ENCODE measurements at regions of chr16 and their contacts with region 1.

Region 1: GRCh38 chr16:79601931-79602627 is 1.5 kb upstream of the MAF start:
- DNase-seq: peak; percentile 92
- H3K4me3 Mint-ChIP-seq: peak overlapping the region; percentile 96
- H3K27ac Mint-ChIP-seq: peak overlapping the region; percentile 98
- H3K4me1 Mint-ChIP-seq: peaks cover 38% of the 10 kb centered on the region
- H3K27me3 Mint-ChIP-seq: peaks cover 3% of the 10 kb centered on the region

Region 2: DNA sequence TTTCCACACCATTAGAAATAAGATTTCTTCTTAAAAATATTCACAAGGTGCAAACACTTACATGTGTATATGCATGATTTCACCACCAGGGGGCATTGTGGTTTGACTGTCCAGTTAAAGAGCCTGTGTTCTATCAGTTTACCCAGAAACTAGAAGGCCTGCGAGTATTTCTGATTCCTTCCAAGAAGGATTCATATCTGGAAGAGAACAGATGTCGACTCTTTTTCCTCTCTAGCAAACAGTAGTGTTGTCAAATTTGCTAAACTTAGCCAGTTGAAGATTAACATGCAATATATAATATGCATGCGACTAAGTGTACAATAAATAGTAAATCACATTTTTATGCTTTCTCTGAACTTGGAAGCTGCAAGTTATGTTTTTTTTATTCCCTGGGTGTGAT is 1098.5 kb before region 1 on chr16:
- CTCF ChIA-PET with region 1: no interaction called
- POLR2A ChIA-PET with region 1: no interaction called
- intact Hi-C with region 1: loop called (anchors 10 kb)
- DNase-seq: peak; percentile 52
- H3K4me3 Mint-ChIP-seq: no peak overlapping the region
- H3K27ac Mint-ChIP-seq: no peak overlapping the region
- H3K4me1 Mint-ChIP-seq: no peaks in the 10 kb centered on the region
- H3K27me3 Mint-ChIP-seq: no peaks in the 10 kb centered on the region

Region 3: GRCh38 chr16:78900044-78900811 is 701.9 kb before region 1 on chr16:
- CTCF ChIA-PET with region 1: interaction called, 3 read pairs
- POLR2A ChIA-PET with region 1: interaction called, 14 read pairs
- intact Hi-C with region 1: loop called (anchors 1 kb)
- DNase-seq: no peak
- H3K4me3 Mint-ChIP-seq: peak overlapping the region; percentile 20
- H3K27ac Mint-ChIP-seq: peak overlapping the region; percentile 96
- H3K4me1 Mint-ChIP-seq: peaks cover 76% of the 10 kb centered on the region
- H3K27me3 Mint-ChIP-seq: no peaks in the 10 kb centered on the region

Region 4: DNA sequence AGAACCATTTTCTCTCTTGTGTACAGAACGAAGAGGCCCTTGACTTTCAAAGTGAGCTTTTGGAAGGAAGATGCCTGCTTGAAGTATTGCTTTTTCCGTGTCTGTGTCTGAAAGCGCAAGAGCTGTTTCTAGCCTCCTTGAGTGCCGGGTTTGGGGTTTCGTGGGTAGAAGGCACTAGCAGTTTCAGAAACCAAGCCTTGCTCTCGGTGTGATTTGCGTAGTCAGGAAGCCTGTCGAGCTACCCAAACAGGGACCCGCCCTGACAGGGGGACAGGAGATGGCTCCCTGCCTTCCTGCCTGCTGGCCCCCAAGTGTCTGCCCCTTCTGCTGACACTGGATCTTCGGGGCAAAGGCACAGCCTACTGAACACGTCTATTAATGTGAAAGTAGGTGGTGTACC is 323.6 kb before region 1 on chr16:
- CTCF ChIA-PET with region 1: interaction called, 9 read pairs
- POLR2A ChIA-PET with region 1: interaction called, 18 read pairs
- intact Hi-C with region 1: loop called (anchors 2 kb)
- DNase-seq: peak; percentile 83
- H3K4me3 Mint-ChIP-seq: peak overlapping the region; percentile 54
- H3K27ac Mint-ChIP-seq: peak overlapping the region; percentile 83
- H3K4me1 Mint-ChIP-seq: peaks cover 84% of the 10 kb centered on the region
- H3K27me3 Mint-ChIP-seq: peaks cover 2% of the 10 kb centered on the region

Region 5: GRCh38 chr16:79618692-79619050 is 16.6 kb after region 1 on chr16:
- CTCF ChIA-PET with region 1: interaction called, 8 read pairs
- POLR2A ChIA-PET with region 1: interaction called, 15 read pairs
- intact Hi-C with region 1: no loop called
- DNase-seq: peak; percentile 85
- H3K4me3 Mint-ChIP-seq: peak overlapping the region; percentile 37
- H3K27ac Mint-ChIP-seq: peak overlapping the region; percentile 84
- H3K4me1 Mint-ChIP-seq: peaks cover 53% of the 10 kb centered on the region
- H3K27me3 Mint-ChIP-seq: peaks cover 31% of the 10 kb centered on the region

Region 6: DNA sequence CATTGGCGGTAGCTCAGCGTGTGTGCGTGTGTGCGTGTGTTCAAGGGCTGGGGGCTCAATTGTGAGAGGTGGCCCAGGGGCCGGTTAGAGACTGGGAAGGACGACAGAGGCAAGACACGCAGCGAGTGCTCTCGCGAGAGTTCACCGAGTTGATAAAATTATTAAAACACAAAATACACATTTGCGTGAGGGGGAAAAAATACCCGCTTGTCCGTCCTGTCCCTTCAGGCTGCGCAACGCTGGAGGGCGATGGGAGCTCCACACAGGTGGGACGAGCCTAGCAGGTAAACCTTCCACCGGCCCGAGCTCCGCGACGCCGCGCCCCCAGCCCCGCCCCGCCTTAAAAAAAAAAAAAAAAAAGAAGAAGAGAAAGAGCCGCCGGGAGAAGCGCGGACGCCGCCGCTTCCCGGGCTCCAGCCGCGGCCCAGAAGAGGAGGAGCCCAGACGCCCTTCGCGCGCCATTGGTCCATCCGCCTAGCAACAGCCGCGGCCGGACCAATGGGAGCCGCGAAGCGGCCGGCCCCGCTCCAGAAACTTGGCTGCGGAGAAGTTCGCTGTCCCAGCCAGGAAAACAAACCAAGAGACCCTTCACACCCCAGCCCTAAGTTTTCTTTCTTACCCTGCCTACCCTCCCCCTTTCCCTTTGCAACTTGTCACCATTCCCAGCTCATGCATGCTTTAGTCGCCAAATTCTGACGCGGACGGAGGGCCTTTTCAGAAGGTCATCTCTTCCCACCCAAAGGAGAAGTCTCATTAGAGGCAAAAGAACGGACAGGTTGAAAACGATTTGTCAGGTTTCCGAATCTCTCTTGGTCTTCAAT is 168.4 kb after region 1 on chr16:
- CTCF ChIA-PET with region 1: no interaction called
- POLR2A ChIA-PET with region 1: no interaction called
- intact Hi-C with region 1: loop called (anchors 5 kb)
- DNase-seq: peak; percentile 84
- H3K4me3 Mint-ChIP-seq: peak overlapping the region; percentile 73
- H3K27ac Mint-ChIP-seq: peak overlapping the region; percentile 50
- H3K4me1 Mint-ChIP-seq: peaks cover 17% of the 10 kb centered on the region
- H3K27me3 Mint-ChIP-seq: peaks cover 1% of the 10 kb centered on the region

Region 7: DNA sequence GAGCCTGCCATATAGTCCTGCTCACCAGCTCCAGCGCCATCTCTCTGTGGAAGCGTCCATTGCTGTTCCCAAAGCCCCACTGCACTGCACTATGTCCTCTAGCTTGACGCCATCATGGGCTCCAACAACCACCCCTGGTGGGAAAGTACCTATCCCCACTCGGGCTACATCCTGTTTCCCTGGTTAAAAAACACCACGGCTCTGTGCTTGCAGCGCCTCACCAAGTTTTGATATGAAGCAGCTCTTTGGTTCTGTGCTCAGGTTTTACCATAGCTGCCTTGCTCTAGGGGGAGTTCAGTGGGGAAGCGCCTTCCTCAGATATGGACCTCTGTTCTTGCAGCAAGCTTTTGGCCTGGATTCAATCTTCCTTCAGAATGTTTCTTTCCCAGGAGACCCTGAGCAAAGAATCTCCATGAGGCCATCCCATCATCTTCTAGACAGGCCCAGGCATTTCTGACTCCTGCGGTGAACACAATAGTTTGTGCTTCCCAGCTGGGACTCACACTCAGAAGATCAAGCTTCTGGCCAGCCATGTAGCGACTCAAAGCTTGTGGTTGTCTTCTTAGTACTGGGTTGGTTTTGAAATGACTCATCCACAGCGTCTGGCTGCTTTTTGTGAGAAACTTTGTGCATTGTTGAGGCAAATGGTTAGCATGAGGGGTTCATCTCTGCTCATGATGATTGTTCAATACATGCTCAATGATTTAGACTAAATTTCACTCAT is 978.2 kb after region 1 on chr16:
- CTCF ChIA-PET with region 1: no interaction called
- POLR2A ChIA-PET with region 1: no interaction called
- intact Hi-C with region 1: loop called (anchors 10 kb)
- DNase-seq: peak; percentile 89
- H3K4me3 Mint-ChIP-seq: peak overlapping the region; percentile 52
- H3K27ac Mint-ChIP-seq: peak overlapping the region; percentile 89
- H3K4me1 Mint-ChIP-seq: peaks cover 52% of the 10 kb centered on the region
- H3K27me3 Mint-ChIP-seq: peaks cover 2% of the 10 kb centered on the region